Activated naive CD8-positive, alpha-beta T cell treated with anti-CD3 and anti-CD28 coated beads, Interleukin-2, amount 10 ng/mL, durations not matched to agents 7 days and 5 days (primary cell): ENCODE measurements at regions of chr7 and their contacts with region 1.

Region 1: DNA sequence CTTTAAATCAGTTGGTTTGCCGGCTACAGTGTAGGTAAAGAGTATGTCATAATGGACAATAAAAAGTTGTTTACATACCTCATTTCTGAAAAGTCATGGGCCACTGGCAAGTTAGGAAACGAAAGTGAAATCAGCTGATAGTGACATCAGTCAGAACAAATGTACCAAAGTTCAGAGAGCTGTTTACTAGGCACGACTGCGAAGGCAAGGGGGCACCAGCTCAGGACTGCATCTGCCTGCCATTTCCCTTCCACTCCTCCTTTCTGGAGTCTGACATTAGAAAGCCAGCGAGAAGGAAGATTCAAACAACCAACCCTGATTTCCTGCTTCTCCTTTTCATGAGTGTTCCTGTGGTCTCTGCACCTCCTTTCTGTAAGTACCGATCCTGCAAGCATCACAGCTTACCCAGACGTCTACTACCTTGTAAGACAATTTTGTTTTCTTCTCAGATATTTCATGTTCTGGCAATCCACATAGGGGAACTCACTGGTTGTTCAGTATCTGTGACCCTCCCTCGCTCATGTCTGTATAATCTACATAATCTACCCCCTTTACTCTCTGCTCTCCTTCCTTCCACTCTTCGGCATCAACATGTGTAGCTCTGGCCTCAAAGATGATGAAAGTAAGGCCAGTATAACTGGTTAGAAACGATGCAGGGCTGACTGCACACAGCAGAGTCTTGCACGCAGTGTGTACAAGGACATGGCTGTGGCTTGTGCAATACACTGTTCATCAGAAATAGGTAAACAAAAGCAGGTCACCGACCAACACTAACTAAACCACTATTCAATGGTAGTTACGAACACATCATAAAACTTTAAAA is at the start of gene TMEM140:
- DNase-seq: peak; percentile 63
- ATAC-seq: peak; percentile 79
- H3K4me3 Mint-ChIP-seq: peak within 1 kb of the TSS; percentile 88
- H3K27ac Mint-ChIP-seq: peak within 1 kb of the TSS; percentile 97
- H3K4me1 Mint-ChIP-seq: peaks cover 38% of the 10 kb centered on the region
- H3K27me3 Mint-ChIP-seq: no peaks in the 10 kb centered on the region
- total RNA-seq, gene TMEM140: 29.8 to 31.0 TPM

Region 2: DNA sequence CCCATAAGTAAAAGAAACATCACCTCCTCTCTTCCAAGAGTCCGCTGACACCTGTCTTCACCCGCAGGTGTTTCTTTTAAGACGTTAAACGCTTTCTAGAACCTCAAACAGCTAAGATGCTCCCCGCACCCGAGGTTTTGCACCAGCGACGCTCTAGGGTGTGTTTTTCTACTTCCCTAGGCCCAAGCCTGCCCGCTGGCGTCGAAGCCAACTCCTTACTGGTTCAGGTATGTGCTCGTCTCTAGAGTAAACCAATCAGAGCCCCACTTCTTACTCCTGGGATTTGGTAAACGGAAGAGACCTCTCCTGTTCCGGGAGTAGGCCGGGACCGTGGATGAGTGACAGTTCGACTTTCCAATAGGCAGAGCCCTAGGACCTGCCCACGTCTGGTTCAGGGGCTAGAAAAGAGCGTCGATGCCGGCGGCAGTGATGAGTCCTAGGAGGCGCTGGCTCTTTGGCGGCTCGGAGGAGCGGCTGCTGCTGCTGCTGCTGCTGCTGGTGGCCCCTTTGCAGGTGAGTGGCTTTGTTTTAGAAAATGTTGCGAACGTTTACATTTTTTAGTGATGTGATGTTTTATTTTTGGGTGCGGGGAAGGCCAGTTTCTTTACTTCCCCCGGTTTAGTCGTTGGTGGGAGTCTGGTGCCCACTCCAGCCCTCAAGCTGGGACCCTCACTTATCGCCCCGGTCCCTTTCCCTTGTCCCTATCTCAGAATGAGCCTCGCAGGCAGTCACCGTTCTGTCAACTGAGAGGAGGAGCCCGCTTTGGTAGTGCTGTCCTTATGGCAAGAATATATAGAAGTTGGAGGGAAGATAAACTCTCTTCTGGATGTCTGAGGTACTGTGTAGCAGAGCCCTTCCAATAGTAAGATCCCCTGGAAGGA is 501.4 kb before region 1 on chr7 and contains the start of gene BPGM:
- POLR2A ChIA-PET with region 1: interaction called, 11 read pairs
- DNase-seq: peak; percentile 88
- ATAC-seq: peak; percentile 99
- H3K4me3 Mint-ChIP-seq: no peak within 1 kb of the TSS
- H3K27ac Mint-ChIP-seq: no peak within 1 kb of the TSS
- H3K4me1 Mint-ChIP-seq: peaks cover 14% of the 10 kb centered on the region
- H3K27me3 Mint-ChIP-seq: no peaks in the 10 kb centered on the region
- total RNA-seq, gene BPGM: 13.1 to 13.2 TPM

Region 3: DNA sequence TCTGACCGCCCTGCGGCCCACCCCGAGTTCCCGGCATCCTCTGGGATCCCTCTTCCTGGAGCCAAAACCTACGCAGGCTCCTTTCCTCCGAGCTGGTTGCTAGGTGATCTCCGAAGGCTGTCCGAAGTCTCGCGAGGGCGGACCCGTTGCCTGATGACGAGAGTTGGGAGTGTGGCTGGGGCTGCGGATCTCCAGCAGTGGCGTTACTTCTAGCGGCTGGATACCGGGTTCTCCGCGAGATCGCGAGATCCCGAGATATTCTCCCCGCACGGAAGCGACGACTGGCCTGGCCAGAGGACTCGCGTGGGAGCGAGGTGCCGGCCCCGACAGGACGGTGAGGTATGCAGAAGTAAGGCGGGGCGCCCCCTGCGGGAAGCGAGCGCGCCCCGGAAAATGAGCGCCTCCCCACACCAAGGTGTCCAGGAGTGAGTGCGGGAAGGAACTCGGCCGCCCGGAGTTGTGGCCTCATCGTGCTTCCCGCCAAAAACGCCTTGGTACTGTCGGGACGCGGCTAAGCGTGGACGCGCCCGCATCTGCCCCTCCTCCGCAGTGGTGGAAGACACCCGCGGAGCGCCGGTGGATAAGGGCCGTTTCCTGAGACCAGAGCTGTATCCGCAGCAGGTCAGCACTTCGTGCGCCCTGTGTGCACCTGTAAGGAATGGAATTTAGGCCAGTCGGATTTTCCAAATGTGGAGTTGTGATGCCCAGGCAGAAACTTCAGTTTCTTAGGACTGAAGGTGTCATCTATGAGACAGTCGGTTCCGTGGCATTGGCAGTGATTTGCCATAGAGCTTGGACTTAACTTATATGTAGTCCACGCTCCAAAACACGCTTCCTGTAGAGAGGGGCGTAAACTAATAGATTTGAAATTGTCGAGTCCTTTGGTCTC is 161.5 kb before region 1 on chr7 and contains the start of gene AGBL3:
- POLR2A ChIA-PET with region 1: interaction called, 46 read pairs
- DNase-seq: peak; percentile 93
- ATAC-seq: peak; percentile 93
- H3K4me3 Mint-ChIP-seq: peak within 1 kb of the TSS; percentile 94
- H3K27ac Mint-ChIP-seq: peak within 1 kb of the TSS; percentile 85
- H3K4me1 Mint-ChIP-seq: peaks cover 31% of the 10 kb centered on the region
- H3K27me3 Mint-ChIP-seq: no peaks in the 10 kb centered on the region
- total RNA-seq, gene AGBL3: 4.5 to 6.7 TPM

Region 4: GRCh38 chr7:134992626-134993179 is 155.4 kb before region 1 on chr7:
- POLR2A ChIA-PET with region 1: interaction called, 46 read pairs
- DNase-seq: peak; percentile 31
- ATAC-seq: peak; percentile 66
- H3K4me3 Mint-ChIP-seq: peak overlapping the region; percentile 74
- H3K27ac Mint-ChIP-seq: peak overlapping the region; percentile 91
- H3K4me1 Mint-ChIP-seq: peaks cover 54% of the 10 kb centered on the region
- H3K27me3 Mint-ChIP-seq: no peaks in the 10 kb centered on the region

Region 5: GRCh38 chr7:135160098-135160857 is 12.2 kb after region 1 on chr7:
- POLR2A ChIA-PET with region 1: interaction called, 13 read pairs
- DNase-seq: no peak
- ATAC-seq: peak; percentile 41
- H3K4me3 Mint-ChIP-seq: no peak overlapping the region
- H3K27ac Mint-ChIP-seq: peak overlapping the region; percentile 80
- H3K4me1 Mint-ChIP-seq: peaks cover 23% of the 10 kb centered on the region
- H3K27me3 Mint-ChIP-seq: no peaks in the 10 kb centered on the region

Region 6: DNA sequence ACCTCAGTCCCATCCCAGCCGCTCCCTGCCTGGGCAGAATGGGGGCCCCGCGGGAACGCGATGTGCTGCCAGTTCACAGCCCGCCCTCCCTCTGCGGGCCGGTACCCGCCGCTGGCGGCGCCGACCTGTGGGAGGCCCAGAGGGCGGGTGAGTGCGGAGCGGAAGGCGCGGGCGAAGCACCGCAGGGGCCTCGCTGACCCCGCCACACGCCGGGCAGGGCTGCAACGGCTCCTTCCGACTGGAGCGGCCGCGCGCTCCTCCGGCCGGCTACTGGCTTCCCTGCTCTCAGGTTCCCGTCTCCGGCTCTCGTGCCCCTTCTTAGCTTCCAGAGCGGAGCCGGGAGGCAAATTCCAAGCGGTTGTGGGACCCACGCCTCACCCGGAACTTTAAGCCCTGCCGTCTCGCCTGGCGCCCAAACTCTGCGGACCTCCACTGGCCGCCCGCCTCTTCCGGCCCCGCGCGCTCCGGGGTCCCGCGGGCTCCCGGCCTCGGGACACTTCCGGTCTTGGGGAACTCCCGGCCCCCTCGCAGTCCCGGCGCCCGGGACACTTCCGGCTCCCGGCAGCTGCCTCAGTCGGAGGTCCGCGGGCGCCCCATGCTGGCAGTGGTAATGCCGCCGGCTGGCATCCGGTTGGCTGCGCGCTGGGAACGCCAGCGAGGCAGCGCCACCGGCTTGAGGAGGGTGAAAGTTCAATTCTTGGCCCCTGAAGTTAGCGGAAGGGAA is 22.3 kb after region 1 on chr7 and contains the start of gene CYREN:
- POLR2A ChIA-PET with region 1: interaction called, 49 read pairs
- DNase-seq: peak; percentile 91
- ATAC-seq: peak; percentile 83
- H3K4me3 Mint-ChIP-seq: peak within 1 kb of the TSS; percentile 92
- H3K27ac Mint-ChIP-seq: peak within 1 kb of the TSS; percentile 92
- H3K4me1 Mint-ChIP-seq: peaks cover 31% of the 10 kb centered on the region
- H3K27me3 Mint-ChIP-seq: no peaks in the 10 kb centered on the region
- total RNA-seq, gene CYREN: 39.6 to 40.8 TPM

Region 7: GRCh38 chr7:135211179-135211945 is 63.3 kb after region 1 on chr7 and contains the start of gene WDR91:
- POLR2A ChIA-PET with region 1: interaction called, 19 read pairs
- DNase-seq: peak; percentile 94
- ATAC-seq: peak; percentile 90
- H3K4me3 Mint-ChIP-seq: peak within 1 kb of the TSS; percentile 98
- H3K27ac Mint-ChIP-seq: peak within 1 kb of the TSS; percentile 99
- H3K4me1 Mint-ChIP-seq: peaks cover 9% of the 10 kb centered on the region
- H3K27me3 Mint-ChIP-seq: peaks cover 1% of the 10 kb centered on the region
- total RNA-seq, gene WDR91: 18.7 to 19.1 TPM